AG04450 (cell line): ENCODE measurements at regions of chr3 and their contacts with region 1.

Region 1: DNA sequence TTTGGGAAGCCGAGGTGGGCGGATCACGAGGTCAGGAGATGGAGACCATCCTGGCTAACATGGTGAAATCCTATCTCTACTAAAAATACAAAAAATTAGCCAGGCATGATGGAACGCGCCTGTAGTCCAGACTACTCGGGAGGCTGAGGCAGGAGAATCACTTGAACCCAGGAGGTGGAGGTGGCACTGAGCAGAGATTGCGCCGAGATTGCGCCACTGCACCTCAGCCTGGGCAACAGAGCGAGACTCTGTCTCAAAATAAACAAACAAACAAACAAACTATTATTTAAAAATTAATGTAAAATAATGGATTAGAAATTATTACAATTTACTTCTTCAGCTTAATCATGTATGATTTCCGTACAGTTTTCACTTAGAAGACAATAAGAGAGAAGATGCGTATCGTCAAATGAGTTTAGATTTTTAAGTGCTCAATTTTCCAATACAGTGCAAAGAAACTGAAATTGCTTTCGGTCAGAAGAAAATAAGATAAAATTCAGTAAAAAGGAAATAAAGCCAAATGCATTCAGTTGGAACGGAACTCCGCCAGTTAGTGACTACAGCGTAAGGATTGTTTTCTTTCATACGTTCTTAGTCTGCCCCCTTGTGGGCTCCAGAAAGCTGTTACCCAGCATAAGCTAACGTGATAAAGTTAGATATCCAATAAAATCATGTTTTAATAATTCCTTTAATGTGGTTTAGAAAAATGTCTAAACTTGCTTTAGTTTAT is 24.8 kb downstream of the AADAC start:
- DNase-seq: peak; percentile 65
- H3K4me3 ChIP-seq: no peak overlapping the region
- H3K27ac ChIP-seq: no peak overlapping the region
- H3K27me3 ChIP-seq: no peaks in the 10 kb centered on the region
- CTCF ChIP-seq: peak; percentile 81

Region 2: DNA sequence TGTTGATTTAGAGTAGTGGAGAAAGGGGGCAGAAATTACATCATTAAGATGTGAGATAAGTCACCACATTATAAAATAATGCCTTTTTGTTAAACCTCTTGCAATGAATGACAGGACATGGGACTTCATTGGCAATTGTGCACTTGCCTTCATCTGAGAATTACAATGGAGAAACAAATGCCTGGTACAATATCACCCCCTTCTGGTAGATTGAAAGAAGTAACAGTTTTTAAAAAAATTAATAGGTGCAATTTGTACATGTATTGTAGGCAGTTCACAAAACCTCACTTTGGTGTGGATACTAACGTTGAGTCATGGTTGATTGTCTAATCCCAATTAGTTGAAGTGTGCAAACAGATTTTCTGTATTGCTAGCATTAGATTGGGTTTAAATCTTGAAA is 555.8 kb before region 1 on chr3:
- CTCF ChIA-PET with region 1: interaction called, 10 read pairs
- POLR2A ChIA-PET with region 1: no interaction called
- DNase-seq: no peak
- H3K4me3 ChIP-seq: no peak overlapping the region
- H3K27ac ChIP-seq: no peak overlapping the region
- H3K27me3 ChIP-seq: no peaks in the 10 kb centered on the region
- CTCF ChIP-seq: peak; percentile 65

Region 3: DNA sequence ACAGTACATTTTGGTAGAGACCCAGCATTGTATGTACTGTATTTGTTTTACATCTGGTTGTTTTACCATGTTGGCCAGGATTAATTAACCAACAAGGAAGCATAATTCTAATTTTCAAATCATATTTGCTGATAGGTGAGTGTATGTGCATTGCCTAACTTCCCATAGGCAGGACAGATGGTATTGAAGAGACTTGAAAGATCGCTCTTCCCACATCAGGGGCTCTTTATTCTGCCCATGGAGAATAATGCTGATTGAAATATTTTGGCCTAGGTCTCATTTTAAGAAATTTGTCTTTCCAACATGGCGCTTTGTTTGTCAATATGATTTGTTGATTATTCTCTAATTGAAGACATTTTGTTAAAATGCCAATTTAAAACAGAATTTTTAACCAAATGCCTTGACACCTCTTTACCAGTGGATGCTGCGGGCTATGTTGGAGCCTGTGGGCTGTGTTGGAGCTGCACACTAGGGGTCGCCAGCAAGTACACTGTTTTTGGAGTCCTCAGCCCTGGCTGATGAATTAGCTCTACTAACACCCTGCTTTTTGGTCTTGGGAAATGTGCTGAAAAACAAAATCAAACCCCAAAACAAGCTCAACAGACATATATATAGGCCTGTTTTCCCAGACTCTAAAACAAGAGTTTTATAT is 459.5 kb before region 1 on chr3:
- CTCF ChIA-PET with region 1: interaction called, 11 read pairs
- POLR2A ChIA-PET with region 1: no interaction called
- DNase-seq: no peak
- H3K4me3 ChIP-seq: no peak overlapping the region
- H3K27ac ChIP-seq: no peak overlapping the region
- H3K27me3 ChIP-seq: no peaks in the 10 kb centered on the region
- CTCF ChIP-seq: peak; percentile 80

Region 4: GRCh38 chr3:151468284-151468917 is 370.3 kb before region 1 on chr3:
- CTCF ChIA-PET with region 1: interaction called, 76 read pairs
- POLR2A ChIA-PET with region 1: no interaction called
- DNase-seq: peak; percentile 42
- H3K4me3 ChIP-seq: no peak overlapping the region
- H3K27ac ChIP-seq: no peak overlapping the region
- H3K27me3 ChIP-seq: peaks cover 4% of the 10 kb centered on the region
- CTCF ChIP-seq: peak; percentile 94

Region 5: DNA sequence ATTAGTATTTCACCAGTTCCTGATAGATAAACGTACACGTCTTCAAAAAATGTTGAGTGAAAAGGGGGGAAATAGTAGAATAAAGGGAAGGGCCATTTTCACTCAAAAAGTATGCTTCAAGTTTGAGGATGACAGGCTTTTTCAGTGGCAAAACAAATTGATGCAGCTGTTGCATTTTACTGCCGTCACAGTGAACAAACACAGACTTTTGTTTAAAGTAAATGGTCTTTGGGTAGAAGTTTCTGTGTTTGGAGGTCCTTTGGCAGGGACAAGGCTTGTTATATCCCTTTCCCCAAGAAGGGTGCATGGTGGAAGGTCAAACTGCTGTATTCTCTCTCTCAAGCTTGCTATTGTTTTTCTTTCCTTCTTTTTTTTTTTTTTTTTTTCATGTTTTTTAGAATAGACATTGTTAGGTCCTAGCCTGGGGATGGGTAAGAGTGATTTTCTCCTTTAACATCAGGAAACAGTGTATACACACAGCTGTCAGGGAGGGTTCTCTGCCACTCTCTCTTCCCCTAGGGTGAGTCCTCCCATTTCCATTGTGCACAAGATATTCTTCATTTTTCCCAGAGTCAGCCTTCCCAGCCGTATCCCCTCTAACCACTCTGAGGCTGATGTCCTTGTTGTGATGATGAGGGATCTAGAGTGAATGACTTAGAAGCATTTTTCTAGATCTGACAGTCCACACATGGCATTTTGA is 28.1 kb after region 1 on chr3:
- CTCF ChIA-PET with region 1: interaction called, 5 read pairs
- POLR2A ChIA-PET with region 1: interaction called, 10 read pairs
- DNase-seq: no peak
- H3K4me3 ChIP-seq: no peak overlapping the region
- H3K27ac ChIP-seq: no peak overlapping the region
- H3K27me3 ChIP-seq: no peaks in the 10 kb centered on the region
- CTCF ChIP-seq: no peak